ENCODE measurements at regions of chr2 and their contacts with region 1.

Region 1: DNA sequence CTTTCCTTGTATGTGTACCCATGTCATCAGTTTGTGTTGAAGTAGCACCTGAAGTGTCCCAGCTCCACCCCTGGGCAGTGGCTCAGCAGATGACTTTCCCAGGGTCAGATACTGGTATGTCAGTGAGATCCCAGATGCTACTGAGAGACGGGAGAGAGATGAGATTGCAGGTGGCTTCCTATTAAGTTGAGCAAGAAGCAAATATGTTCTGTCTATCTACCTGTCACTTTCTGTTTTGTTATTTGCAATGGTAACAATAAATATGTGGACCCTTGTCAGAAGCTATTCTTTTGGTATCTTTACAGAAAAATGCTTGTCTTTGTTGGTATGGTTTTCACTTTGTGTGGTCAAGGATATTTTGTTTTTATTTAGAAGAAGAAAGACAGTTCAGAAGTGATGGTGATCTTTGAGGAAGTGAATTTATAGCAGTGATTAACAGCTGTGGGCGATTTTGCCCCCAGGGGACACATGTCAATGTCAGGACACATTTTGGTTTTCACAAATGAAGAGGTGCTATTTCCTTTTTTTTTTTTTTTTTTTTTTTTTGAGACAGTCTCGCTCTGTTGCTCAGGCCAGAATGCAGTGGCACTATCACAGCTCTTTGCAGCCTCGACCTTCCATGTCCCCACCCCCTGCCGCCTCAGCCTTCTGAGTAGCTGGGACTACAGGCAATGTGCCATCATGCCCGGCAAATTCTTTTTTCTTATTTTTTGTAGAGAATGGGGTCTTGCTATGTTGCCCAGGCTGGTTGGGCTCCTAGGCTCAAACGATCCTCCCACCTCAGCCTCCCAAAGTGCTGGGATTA is 21.4 kb downstream of the MGAT5 start:
- DNase-seq: peak in 1 of 35 experiments; percentile 36
- ATAC-seq: peak in 1 of 4 experiments; percentile 50
- H3K4me3 ChIP-seq: no peak overlapping the region
- H3K4me3 Mint-ChIP-seq: no peak overlapping the region
- H3K27ac ChIP-seq: no peak overlapping the region
- H3K27ac Mint-ChIP-seq: peak overlapping the region; percentile 17 to 69
- H3K4me1 ChIP-seq: peaks cover 17 to 23% of the 10 kb centered on the region in 2 experiments
- H3K4me1 Mint-ChIP-seq: peaks cover 62 to 75% (median 62%) of the 10 kb centered on the region in 3 donors
- H3K27me3 ChIP-seq: no peaks in the 10 kb centered on the region
- H3K27me3 Mint-ChIP-seq: no peaks in the 10 kb centered on the region

Region 2: DNA sequence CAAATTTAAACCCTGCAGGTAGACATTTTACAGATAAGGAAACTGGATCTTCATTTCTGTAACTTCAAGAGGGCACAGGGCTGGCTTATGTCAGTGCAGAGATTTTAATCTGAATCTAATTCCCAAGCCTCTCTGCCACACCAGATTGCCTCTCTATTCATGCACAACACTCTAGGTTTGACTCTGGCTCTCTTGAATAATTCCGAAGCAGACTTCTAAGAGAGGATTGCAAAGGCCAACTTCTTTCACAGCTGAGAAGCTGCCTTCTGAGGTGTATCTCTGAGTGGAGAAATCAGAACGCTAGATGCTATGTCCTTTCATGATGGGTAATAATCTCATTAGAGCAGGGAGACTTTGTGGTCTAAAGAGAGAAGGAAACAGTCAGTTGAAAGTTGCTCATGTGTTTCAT is 41.5 kb before region 1 on chr2:
- CTCF ChIA-PET with region 1: no interaction called
- POLR2A ChIA-PET with region 1: interaction called in 1 of 2 experiments, 14 read pairs
- DNase-seq: no peak
- ATAC-seq: peak in 1 of 4 experiments; percentile 7
- H3K4me3 ChIP-seq: peak overlapping the region in 1 of 2 donors; percentile 6
- H3K4me3 Mint-ChIP-seq: peak overlapping the region; percentile 32 to 48 (median 37)
- H3K27ac ChIP-seq: peak overlapping the region; percentile 81
- H3K27ac Mint-ChIP-seq: peak overlapping the region; percentile 89 to 93
- H3K4me1 ChIP-seq: peaks cover 50 to 62% of the 10 kb centered on the region in 2 experiments
- H3K4me1 Mint-ChIP-seq: peaks cover 76 to 90% (median 84%) of the 10 kb centered on the region in 3 donors
- H3K27me3 ChIP-seq: no peaks in the 10 kb centered on the region
- H3K27me3 Mint-ChIP-seq: no peaks in the 10 kb centered on the region